ENCODE measurements at regions of chr1 and their contacts with region 1.

Region 1: GRCh38 chr1:6438047-6438525 is 13.5 kb downstream of the ESPN start:
- DNase-seq: peak; percentile 92
- ATAC-seq: peak; percentile 65
- H3K4me3 ChIP-seq: no peak overlapping the region
- H3K27ac ChIP-seq: no peak overlapping the region
- H3K4me1 ChIP-seq: no peaks in the 10 kb centered on the region; the same call in 1 of the 2 replicates
- H3K27me3 ChIP-seq: no peaks in the 10 kb centered on the region
- CTCF ChIP-seq: peak; percentile 94

Region 2: GRCh38 chr1:6409053-6409452 is 29.0 kb before region 1 on chr1:
- CTCF ChIA-PET with region 1: interaction called, 7 read pairs
- POLR2A ChIA-PET with region 1: interaction called, 3 read pairs
- intact Hi-C with region 1: loop called (anchors 1 kb)
- DNase-seq: no peak
- ATAC-seq: no peak
- H3K4me3 ChIP-seq: no peak overlapping the region
- H3K27ac ChIP-seq: no peak overlapping the region
- H3K4me1 ChIP-seq: peaks cover 24% of the 10 kb centered on the region
- H3K27me3 ChIP-seq: no peaks in the 10 kb centered on the region
- CTCF ChIP-seq: peak; percentile 43; the same call in 1 of the 2 replicates

Region 3: GRCh38 chr1:6423321-6423999 is 14.6 kb before region 1 on chr1:
- CTCF ChIA-PET with region 1: interaction called, 29 read pairs
- POLR2A ChIA-PET with region 1: interaction called, 4 read pairs
- intact Hi-C with region 1: loop called (anchors 1 kb)
- DNase-seq: peak; percentile 98
- ATAC-seq: peak; percentile 46
- H3K4me3 ChIP-seq: peak overlapping the region; percentile 73
- H3K27ac ChIP-seq: peak overlapping the region; percentile 73
- H3K4me1 ChIP-seq: peaks cover 63% of the 10 kb centered on the region
- H3K27me3 ChIP-seq: no peaks in the 10 kb centered on the region
- CTCF ChIP-seq: peak; percentile 98

Measured in PC-3 (cell line).